Sigmoid colon (tissue), 7 donors: ENCODE measurements at regions of chr2 and their contacts with region 1.

Region 1: DNA sequence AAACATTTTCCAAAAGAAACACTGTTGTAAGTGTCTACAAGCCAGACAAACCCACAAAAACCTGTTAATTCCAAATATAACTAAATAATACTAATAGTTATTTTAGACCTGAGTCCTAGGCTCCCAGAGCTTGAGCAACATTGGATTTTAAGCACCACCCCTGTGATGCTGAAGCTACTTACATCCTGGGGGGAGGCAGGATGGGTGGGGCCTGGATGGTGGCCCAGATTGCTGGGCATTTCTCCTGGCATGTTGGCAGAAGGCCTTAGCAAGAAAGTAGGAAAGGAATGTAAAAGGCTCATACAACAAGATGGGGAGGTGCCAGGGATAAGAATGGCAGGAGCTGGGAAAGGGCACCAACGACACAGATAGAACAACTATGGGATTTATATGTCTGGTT is 50.7 kb upstream of the OTX1 start:
- DNase-seq: no peak
- H3K4me3 ChIP-seq: no peak overlapping the region
- H3K27ac ChIP-seq: peak overlapping the region in 3 of 4 donors; percentile 28 to 50 (median 32)
- H3K4me1 ChIP-seq: peaks cover 0 to 17% (median 12%) of the 10 kb centered on the region in 4 donors
- H3K27me3 ChIP-seq: no peaks in the 10 kb centered on the region
- CTCF ChIP-seq: no peak
- EP300 ChIP-seq: no peak
- POLR2A ChIP-seq: no peak

Region 2: GRCh38 chr2:62456721-62457539 is 543.0 kb before region 1 on chr2:
- intact Hi-C with region 1: loop called (anchors 10 kb)
- DNase-seq: peak; percentile 85
- H3K4me3 ChIP-seq: peak overlapping the region; percentile 57 to 74 (median 62)
- H3K27ac ChIP-seq: peak overlapping the region; percentile 84 to 86 (median 84)
- H3K4me1 ChIP-seq: peaks cover 0 to 31% (median 24%) of the 10 kb centered on the region in 4 donors
- H3K27me3 ChIP-seq: no peaks in the 10 kb centered on the region
- CTCF ChIP-seq: peak; percentile 96 to 99 (median 98)
- EP300 ChIP-seq: no peak
- POLR2A ChIP-seq: no peak

Region 3: DNA sequence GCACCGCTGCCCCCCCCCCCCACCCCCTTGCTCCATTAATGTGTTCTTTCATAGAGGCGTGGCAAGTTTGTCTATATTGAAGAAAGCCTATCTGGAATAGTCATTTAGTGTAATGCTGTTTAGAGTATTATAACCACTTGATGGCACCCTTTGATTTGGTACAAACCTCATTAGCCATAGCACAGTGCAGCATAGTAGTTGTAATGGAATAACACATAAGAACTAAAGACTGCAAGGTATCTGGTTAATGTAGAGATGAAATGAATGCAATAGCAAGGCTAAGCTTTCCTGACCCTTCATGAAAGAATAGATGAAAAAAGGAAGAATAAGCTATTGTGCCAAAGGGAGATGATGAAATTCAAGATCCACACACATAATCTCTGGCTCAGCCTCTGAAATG is 212.5 kb before region 1 on chr2:
- intact Hi-C with region 1: loop called (anchors 10 kb)
- DNase-seq: no peak
- H3K4me3 ChIP-seq: no peak overlapping the region
- H3K27ac ChIP-seq: no peak overlapping the region
- H3K4me1 ChIP-seq: peaks cover 0 to 90% (median 55%) of the 10 kb centered on the region in 4 donors
- H3K27me3 ChIP-seq: no peaks in the 10 kb centered on the region
- CTCF ChIP-seq: peak in 1 of 4 experiments; percentile 18
- EP300 ChIP-seq: no peak
- POLR2A ChIP-seq: no peak

Region 4: DNA sequence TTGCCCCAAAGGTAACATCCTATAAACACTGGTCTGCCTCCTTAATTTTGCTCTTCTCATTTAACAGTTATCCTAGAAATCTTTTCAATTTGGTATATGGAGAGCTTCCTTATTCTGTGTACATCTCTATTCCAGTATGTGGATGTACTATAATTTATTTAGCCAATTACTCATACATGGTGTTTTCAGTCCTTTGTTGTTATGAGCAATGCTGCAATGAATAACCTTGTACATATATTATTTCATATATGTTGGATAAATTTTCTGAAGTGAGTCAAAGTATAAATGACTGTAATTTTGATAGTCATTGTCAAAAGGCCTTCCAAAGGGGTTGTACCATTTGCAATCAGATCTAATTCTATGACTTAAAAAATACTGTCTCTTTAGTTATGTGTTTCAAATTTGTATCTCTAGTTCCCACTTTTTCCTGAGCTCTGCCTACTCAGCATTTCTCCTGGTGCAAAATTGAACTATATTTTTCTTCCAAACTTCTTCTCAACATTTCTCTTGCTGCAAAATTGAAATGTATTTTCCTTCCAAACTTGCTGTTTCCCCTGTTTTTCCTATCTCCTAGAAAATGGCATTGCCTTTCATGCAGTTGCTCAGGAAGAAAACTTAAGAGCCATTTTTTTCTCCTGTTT is 102.6 kb before region 1 on chr2:
- intact Hi-C with region 1: no loop called
- DNase-seq: no peak
- H3K4me3 ChIP-seq: no peak overlapping the region
- H3K27ac ChIP-seq: no peak overlapping the region
- H3K4me1 ChIP-seq: peaks cover 0 to 28% (median 3%) of the 10 kb centered on the region in 4 donors
- H3K27me3 ChIP-seq: no peaks in the 10 kb centered on the region
- CTCF ChIP-seq: no peak
- EP300 ChIP-seq: no peak
- POLR2A ChIP-seq: no peak

Region 5: GRCh38 chr2:62956651-62957050 is 43.3 kb before region 1 on chr2:
- intact Hi-C with region 1: no loop called
- DNase-seq: no peak
- H3K4me3 ChIP-seq: no peak overlapping the region
- H3K27ac ChIP-seq: no peak overlapping the region
- H3K4me1 ChIP-seq: no peaks in the 10 kb centered on the region
- H3K27me3 ChIP-seq: no peaks in the 10 kb centered on the region
- CTCF ChIP-seq: no peak
- EP300 ChIP-seq: no peak
- POLR2A ChIP-seq: no peak

Region 6: GRCh38 chr2:63078852-63079606 is 79.1 kb after region 1 on chr2:
- intact Hi-C with region 1: no loop called
- DNase-seq: no peak
- H3K4me3 ChIP-seq: no peak overlapping the region
- H3K27ac ChIP-seq: no peak overlapping the region
- H3K4me1 ChIP-seq: no peaks in the 10 kb centered on the region
- H3K27me3 ChIP-seq: peaks cover 0 to 6% (median 0%) of the 10 kb centered on the region in 3 donors
- CTCF ChIP-seq: no peak
- EP300 ChIP-seq: no peak
- POLR2A ChIP-seq: no peak